A549 (cell line): ENCODE measurements at regions of chr17 and their contacts with region 1.

Region 1: GRCh38 chr17:44781553-44782495 is 23.0 kb downstream of the ADAM11 start:
- DNase-seq: no peak
- ATAC-seq: no peak
- H3K4me3 ChIP-seq: no peak overlapping the region
- H3K27ac ChIP-seq: no peak overlapping the region
- H3K4me1 ChIP-seq: peaks cover 8% of the 10 kb centered on the region; the same call in 2 of the 3 replicates
- CTCF ChIP-seq: no peak
- EP300 ChIP-seq: no peak
- POLR2A ChIP-seq: no peak
- RAD21 ChIP-seq: no peak

Region 2: DNA sequence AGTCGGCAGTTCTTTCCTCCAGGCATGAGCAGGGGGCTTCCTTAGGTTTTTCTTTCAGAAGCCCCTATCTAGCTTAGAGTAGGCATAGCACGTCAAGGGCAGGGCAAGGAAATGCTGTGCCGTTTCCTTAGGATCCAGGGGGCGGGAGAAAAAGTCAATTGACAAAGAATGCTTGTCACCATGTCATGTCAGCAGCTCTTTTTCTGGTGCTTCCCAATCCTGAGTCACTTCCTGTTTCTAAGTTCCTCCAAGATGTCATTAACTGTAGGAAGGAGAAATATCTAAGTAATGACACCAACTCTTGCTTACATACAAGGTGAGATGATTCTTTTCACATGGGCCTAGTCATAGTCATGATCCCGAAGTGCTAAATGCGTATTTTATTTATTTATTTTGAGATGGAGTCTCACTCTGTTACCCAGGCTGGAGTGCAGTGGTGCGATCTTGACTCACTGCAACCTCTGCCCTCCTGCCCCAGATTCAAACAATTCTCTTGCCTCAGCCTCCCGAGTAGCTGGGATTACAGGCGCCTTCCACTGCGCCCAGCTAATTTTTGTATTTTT is 13.1 kb after region 1 on chr17:
- CTCF ChIA-PET with region 1: interaction called, 89 read pairs
- POLR2A ChIA-PET with region 1: no interaction called
- DNase-seq: peak; percentile 56 to 84
- ATAC-seq: peak; percentile 81 to 83
- H3K4me3 ChIP-seq: no peak overlapping the region
- H3K27ac ChIP-seq: peak overlapping the region; percentile 28 to 78; a peak in 5 of 6 replicates
- H3K4me1 ChIP-seq: peaks cover 18% of the 10 kb centered on the region
- CTCF ChIP-seq: no peak
- EP300 ChIP-seq: no peak
- POLR2A ChIP-seq: no peak
- RAD21 ChIP-seq: no peak